ENCODE measurements at regions of chr4 and their contacts with region 1.

Region 1: DNA sequence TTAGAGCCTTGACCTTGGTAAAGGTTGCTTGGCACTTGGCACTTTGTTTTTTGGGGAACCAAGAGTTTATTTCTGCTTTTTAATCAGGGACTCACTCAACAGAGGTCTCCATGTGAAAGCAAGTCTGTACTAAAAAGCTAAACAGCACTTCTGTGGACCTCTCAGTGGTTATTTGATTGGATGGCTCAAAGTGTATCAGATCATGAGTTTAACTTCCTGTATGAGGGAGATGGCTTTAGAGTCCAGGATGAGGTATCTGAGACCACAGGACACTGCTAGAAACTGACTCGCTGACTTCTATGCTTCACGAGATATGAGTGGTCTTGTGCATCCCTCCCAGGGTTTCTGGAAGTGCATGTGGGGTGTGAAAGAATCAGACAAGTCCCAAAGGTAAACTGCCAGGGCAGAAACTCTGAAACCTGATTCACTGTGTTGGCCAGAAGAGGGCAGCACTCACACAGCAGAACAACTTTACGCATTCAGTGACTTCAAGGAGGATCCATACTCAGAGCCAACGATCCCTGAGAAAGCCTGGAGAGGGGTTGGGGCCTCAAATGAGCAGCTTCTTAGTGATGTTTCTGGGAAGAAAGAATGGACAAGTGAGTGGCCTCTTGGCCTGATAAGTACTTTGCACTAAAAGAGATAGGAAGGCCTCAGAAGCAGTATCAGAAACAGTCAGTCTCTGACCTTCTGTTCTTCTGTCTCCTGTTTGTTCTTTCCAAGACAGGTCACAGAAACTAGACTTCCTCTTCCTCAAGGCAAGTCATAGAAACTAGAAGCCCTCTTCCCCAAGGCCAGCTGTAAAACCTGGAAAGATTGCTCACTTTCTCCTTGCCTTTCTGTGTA is 220.3 kb upstream of the CXCL13 start:
- DNase-seq: peak; percentile 41 to 87
- H3K4me3 ChIP-seq: no peak overlapping the region
- CTCF ChIP-seq: no peak
- POLR2A ChIP-seq: no peak

Region 2: GRCh38 chr4:76270244-76271175 is 1114.8 kb before region 1 on chr4:
- intact Hi-C with region 1: no loop called
- DNase-seq: no peak
- H3K4me3 ChIP-seq: no peak overlapping the region
- CTCF ChIP-seq: no peak
- POLR2A ChIP-seq: no peak

Region 3: DNA sequence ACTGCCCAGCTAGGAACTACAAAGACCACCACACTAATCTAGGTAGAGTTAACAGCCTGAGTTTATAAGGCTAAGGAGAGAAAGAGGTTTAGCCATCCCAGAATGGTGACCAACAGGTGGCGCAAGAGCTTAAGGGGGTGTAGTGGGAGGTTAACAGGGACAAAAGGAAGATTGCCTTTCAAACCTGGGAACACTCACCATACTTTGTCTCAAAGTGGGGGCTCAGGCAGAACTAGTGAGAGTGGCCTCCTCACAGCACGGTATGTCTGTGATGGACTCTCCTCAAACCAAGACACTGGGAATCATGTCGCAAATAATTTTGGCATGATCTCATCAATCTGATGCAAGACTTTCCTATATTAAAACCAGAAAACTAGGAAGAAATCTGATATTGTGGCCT is 333.0 kb before region 1 on chr4:
- intact Hi-C with region 1: no loop called
- DNase-seq: no peak
- H3K4me3 ChIP-seq: no peak overlapping the region
- CTCF ChIP-seq: no peak
- POLR2A ChIP-seq: no peak

Region 4: DNA sequence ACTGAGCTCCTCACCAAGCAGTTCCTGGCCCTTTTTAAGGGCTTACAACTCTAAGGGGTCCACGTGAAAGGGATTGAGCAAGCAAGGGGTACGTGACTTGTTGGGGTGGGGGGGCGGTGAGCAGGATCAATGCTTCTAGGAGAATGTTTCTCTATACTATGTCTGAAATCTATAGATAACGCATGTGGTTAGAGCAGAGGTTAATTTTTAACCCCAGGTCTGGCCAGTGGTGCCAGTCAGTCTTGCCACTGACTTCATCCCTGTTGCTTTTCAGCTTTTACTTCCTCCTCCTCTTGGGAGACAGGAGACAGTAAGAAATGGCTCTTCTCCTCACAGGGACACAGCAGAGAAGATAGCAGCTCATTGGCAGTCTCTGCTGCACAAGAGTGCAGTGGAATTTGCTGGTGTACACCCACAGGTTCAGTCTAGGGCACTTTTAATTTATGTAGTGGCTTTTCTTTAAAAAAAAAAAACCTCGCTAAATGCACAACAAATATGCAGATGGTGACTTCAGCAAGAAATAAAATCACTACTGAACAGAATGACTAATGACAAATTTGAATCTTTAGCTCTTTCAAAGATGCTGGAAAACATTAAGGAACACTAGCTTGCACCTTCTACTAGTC is 37.9 kb before region 1 on chr4:
- intact Hi-C with region 1: no loop called
- DNase-seq: no peak
- H3K4me3 ChIP-seq: no peak overlapping the region
- CTCF ChIP-seq: no peak
- POLR2A ChIP-seq: no peak

Region 5: GRCh38 chr4:77433418-77433733 is 48.0 kb after region 1 on chr4:
- intact Hi-C with region 1: loop called (anchors 10 kb)
- DNase-seq: no peak
- H3K4me3 ChIP-seq: no peak overlapping the region
- CTCF ChIP-seq: no peak
- POLR2A ChIP-seq: no peak

Region 6: GRCh38 chr4:77599378-77599777 is 214.0 kb after region 1 on chr4:
- intact Hi-C with region 1: loop called (anchors 10 kb)
- DNase-seq: no peak
- H3K4me3 ChIP-seq: no peak overlapping the region
- CTCF ChIP-seq: no peak
- POLR2A ChIP-seq: no peak